Activated CD4-positive, alpha-beta memory T cell treated with anti-CD3 and anti-CD28 coated beads, Interleukin-2, amount 10 ng/mL, durations not matched to agents 7 days and 5 days (primary cell): ENCODE measurements at regions of chr14 and their contacts with region 1.

Region 1: GRCh38 chr14:24431569-24432258 is 2.0 kb downstream of the KHNYN start:
- DNase-seq: peak; percentile 92
- H3K4me3 Mint-ChIP-seq: peak overlapping the region; percentile 92
- H3K27ac Mint-ChIP-seq: peak overlapping the region; percentile 92
- H3K4me1 Mint-ChIP-seq: peaks cover 60% of the 10 kb centered on the region
- H3K27me3 Mint-ChIP-seq: no peaks in the 10 kb centered on the region

Region 2: GRCh38 chr14:24179961-24180796 is 251.5 kb before region 1 on chr14:
- CTCF ChIA-PET with region 1: no interaction called
- POLR2A ChIA-PET with region 1: no interaction called
- DNase-seq: no peak
- H3K4me3 Mint-ChIP-seq: no peak overlapping the region
- H3K27ac Mint-ChIP-seq: no peak overlapping the region
- H3K4me1 Mint-ChIP-seq: peaks cover 3% of the 10 kb centered on the region
- H3K27me3 Mint-ChIP-seq: no peaks in the 10 kb centered on the region

Region 3: DNA sequence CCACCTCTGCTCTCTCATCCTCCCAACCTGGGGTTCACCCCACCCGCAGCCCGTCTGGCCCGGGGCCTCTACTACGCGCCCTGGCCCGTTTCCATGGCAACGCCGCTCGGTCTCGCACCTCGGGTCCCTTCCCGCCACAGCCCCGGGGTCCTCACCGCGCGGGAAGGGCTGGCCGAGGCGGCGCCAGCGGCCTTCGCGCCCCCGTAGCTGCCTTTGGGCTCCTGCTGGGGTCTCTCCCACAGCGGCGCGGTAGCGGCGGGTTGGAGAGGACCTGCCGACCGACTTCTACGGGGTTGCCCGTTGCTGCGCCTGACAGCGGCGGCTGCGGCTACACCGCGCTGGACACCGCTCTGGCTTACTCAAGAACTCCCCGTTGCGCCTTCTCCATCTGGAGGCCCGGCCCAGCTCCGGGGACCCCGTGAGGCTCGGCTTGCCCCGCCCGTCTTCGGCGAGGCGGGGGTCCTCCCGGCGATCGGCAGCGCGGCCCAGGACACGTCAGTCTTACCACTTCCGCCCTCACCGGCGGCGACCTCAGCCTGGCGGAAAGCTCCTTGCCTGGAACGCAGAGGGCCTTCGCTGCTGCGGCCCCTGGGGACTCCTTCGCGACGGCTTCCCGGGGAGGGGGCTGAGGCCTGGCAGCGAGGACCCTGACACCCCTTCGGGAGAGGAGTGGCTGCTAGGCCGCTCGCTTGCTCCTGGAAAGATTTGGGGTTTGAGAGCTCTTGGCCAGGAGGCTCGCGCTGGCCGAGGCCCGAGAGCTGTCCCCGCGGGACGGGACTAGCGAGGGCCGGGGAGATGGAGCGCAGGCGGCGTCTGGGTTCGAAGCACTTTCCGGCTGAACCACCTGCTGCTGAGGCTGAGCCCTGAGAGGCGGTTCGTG is 236.3 kb before region 1 on chr14 and contains the start of gene TM9SF1:
- CTCF ChIA-PET with region 1: interaction called, 4 read pairs
- POLR2A ChIA-PET with region 1: interaction called, 22 read pairs
- DNase-seq: peak; percentile 90
- H3K4me3 Mint-ChIP-seq: peak within 1 kb of the TSS; percentile 96
- H3K27ac Mint-ChIP-seq: peak within 1 kb of the TSS; percentile 95
- H3K4me1 Mint-ChIP-seq: peaks cover 64% of the 10 kb centered on the region
- H3K27me3 Mint-ChIP-seq: no peaks in the 10 kb centered on the region
- total RNA-seq, gene TM9SF1: 30.8 to 35.1 TPM

Region 4: DNA sequence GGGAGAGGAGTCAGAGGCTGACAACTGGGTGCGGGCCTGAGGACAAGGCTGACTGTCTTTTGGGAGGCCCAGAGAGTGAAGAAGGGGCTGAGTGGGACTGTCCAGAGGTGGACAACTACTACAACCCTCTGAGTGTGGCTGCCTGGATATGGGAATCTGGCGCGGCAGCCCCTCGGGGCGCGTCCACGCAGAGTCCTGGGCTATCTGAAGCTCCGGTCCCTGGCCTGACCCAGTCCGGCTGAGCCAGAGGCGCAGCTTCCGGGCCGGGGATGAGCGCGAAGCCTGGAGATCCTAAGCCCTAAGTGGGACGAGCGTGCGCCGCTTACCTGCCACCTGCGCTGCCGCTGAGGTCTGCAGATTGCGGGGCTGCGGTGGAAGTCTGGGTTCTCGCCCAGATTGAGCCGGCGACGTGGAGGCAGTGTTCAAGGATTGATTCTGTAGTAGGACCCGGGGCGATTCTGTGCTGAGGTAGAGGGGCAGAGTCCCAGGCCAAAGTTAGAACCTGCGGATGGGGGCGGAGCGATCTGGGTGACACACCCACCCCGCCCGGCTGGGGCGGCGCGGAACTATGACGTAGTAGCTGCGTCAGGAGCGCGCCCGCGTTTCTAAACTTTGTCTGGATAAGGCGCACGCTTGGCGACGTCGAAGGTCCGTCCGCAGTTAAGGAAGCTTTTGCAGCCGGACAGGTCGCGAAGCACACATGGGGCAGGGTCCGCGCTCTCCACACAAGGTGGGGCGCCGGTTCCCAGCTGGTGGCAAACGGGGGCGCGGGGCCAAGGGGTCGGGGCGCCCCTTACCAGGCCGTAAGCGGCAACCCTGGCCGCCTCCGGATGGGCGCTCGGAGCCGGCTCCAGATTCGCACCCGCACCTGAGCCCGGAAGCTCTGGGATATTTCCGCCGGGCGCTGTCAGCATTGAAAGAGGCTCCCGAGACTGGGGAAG is 132.2 kb before region 1 on chr14 and contains the starts of genes DHRS1 and NOP9:
- CTCF ChIA-PET with region 1: interaction called, 29 read pairs
- POLR2A ChIA-PET with region 1: interaction called, 28 read pairs
- DNase-seq: peak; percentile 94
- H3K4me3 Mint-ChIP-seq: peak within 1 kb of the TSS; percentile 84
- H3K27ac Mint-ChIP-seq: peak within 1 kb of the TSS; percentile 84
- H3K4me1 Mint-ChIP-seq: peaks cover 60% of the 10 kb centered on the region
- H3K27me3 Mint-ChIP-seq: no peaks in the 10 kb centered on the region
- total RNA-seq, gene DHRS1: 31.6 to 33.4 TPM
- total RNA-seq, gene NOP9: 25.8 to 27.7 TPM

Region 5: DNA sequence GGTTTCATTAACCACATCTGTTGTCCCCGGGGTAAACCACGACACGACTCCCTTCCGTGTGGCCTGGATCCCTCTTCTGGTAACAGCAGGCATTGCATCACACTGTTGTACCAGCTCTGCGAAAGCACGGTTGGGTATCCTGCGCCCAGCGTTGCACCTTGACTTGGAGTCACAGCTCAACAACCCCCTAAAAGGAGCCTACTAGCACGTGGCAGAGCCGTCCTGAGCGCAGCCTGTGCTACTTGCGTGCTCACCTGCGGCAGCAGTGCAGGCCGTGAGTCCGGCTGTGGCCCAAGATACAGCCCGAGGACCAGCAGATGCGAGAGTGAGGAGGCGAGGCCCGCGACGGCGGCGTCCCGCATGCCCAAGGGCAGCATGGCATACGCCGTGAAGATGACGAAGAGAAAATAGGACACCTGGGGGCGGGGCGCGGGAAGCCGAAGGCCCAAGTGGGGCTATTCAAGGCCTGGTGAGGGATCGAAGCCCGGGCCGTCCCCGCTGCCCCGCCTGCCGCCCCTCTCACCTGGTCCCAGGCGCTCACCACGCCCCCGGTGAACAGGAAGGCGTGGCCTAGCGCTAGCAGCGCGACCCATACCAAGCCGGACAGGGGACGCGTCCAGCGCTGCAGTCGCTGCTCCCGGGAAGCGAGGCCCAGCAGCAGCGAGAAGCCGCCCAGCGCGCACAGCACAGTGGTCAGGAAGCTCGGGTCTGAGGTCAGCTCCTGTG is 99.3 kb before region 1 on chr14:
- CTCF ChIA-PET with region 1: interaction called, 494 read pairs
- POLR2A ChIA-PET with region 1: interaction called, 221 read pairs
- DNase-seq: peak; percentile 89
- H3K4me3 Mint-ChIP-seq: peak overlapping the region; percentile 71
- H3K27ac Mint-ChIP-seq: peak overlapping the region; percentile 61
- H3K4me1 Mint-ChIP-seq: peaks cover 81% of the 10 kb centered on the region
- H3K27me3 Mint-ChIP-seq: peaks cover 35% of the 10 kb centered on the region

Region 6: DNA sequence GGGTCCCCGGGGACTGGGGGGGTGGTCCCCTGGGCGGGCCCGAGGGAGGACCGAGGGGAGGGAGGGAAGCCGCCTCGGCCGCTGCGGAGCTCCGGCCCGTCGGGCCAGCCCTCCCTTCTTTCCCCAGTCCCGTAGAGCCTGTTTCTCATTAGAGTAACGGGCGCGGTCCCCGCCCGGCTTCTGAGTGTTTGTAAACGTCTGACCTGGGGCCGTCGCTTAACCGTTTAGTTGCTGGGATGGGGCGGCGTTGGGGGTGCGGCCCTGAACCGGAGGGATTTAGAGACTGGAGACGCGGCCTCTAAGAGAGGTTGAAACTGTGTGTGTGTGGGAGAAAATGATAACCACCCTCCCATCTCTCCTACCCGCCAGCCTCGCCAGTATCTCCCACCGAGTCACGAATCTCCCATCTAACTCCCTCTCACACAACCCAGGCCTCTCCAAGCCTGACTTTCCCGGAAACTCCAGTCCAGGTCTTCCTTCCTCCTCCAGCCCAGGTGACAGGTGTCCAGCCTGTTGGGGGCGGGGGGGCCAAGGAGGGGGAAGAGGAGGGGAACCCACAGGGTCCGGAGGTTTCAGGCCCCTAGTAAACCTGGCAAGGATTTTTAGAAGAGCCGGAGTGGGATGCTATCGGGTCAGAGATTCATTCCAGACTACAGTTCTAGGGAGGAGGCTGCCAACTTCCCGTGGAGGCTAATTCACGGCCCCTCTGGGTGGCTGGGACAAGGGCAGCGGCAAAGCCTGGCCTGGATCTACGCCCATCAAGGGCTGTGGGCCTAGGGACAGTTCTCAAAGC is 64.8 kb before region 1 on chr14:
- CTCF ChIA-PET with region 1: interaction called, 52 read pairs
- POLR2A ChIA-PET with region 1: interaction called, 20 read pairs
- DNase-seq: no peak
- H3K4me3 Mint-ChIP-seq: no peak overlapping the region
- H3K27ac Mint-ChIP-seq: no peak overlapping the region
- H3K4me1 Mint-ChIP-seq: peaks cover 20% of the 10 kb centered on the region
- H3K27me3 Mint-ChIP-seq: peaks cover 53% of the 10 kb centered on the region

Region 7: GRCh38 chr14:24418492-24418873 is 13.2 kb before region 1 on chr14:
- CTCF ChIA-PET with region 1: interaction called, 25 read pairs
- POLR2A ChIA-PET with region 1: interaction called, 48 read pairs
- DNase-seq: no peak
- H3K4me3 Mint-ChIP-seq: no peak overlapping the region
- H3K27ac Mint-ChIP-seq: no peak overlapping the region
- H3K4me1 Mint-ChIP-seq: no peaks in the 10 kb centered on the region
- H3K27me3 Mint-ChIP-seq: no peaks in the 10 kb centered on the region